Naive thymus-derived CD4-positive, alpha-beta T cell (primary cell): ENCODE measurements at regions of chr17 and their contacts with region 1.

Region 1: DNA sequence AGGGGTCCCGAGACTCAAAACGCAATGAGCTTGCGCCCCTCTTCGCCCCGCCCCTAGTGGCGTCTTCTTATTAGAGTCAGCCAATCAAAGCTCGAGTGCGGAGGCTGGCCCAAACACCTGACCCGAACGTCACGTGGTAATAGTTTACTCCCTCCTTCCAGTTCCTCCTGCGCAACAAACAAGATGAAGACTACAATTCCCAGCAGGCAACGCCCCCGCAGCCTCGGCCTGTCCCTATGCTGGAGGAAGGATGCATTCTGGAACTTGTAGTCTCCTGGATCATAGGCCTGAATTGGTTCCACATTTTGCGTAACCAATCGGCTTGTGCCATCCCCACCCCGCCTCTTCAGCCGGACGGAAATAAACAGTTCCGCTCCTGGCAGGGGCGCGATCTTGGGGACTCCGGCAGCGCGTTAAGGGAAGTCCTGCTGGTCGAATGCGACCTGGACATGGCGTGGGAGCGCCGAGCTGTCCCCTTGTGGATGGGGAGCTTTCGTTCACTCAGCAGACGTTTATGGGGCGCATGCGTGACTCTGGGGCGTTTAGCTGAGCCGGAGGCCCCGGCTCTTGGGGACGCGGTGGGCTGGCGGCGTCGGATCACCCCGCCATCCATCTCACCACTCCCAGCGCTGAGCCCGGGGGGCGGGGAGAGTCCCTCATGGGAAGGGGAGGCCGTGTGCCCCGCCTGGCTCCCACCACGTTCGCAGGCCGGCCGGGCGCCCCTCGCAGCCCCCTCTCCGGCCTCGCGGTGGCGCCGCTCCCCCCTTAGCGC is at the start of gene WBP2:
- DNase-seq: peak; percentile 82 to 100 (median 98)
- ATAC-seq: peak; percentile 94
- H3K4me3 ChIP-seq: peak within 1 kb of the TSS; percentile 93
- H3K4me3 Mint-ChIP-seq: peak within 1 kb of the TSS in 2 of 10 donors; percentile 89 to 92
- H3K27ac ChIP-seq: peak within 1 kb of the TSS; percentile 88
- H3K27ac Mint-ChIP-seq: peak within 1 kb of the TSS in 6 of 9 donors; percentile 84 to 95 (median 90)
- H3K4me1 ChIP-seq: peaks cover 19 to 25% of the 10 kb centered on the region in 2 donors
- H3K4me1 Mint-ChIP-seq: peaks cover 19 to 47% (median 39%) of the 10 kb centered on the region in 7 donors
- H3K27me3 ChIP-seq: no peaks in the 10 kb centered on the region
- H3K27me3 Mint-ChIP-seq: no peaks in the 10 kb centered on the region
- total RNA-seq, gene WBP2: 87.7 to 159 (median 112) TPM

Region 2: GRCh38 chr17:75289115-75289831 is 566.2 kb before region 1 on chr17 and contains the start of gene SLC25A19:
- CTCF ChIA-PET with region 1: no interaction called
- POLR2A ChIA-PET with region 1: no interaction called
- intact Hi-C with region 1: loop called in 1 of 2 experiments (anchors 1 kb)
- DNase-seq: peak; percentile 80 to 98 (median 95)
- ATAC-seq: peak; percentile 96
- H3K4me3 ChIP-seq: peak within 1 kb of the TSS; percentile 84
- H3K4me3 Mint-ChIP-seq: peak within 1 kb of the TSS; percentile 96 to 100 (median 100)
- H3K27ac ChIP-seq: peak within 1 kb of the TSS; percentile 90
- H3K27ac Mint-ChIP-seq: peak within 1 kb of the TSS; percentile 99 to 100 (median 100)
- H3K4me1 ChIP-seq: peaks cover 0 to 6% of the 10 kb centered on the region in 2 donors
- H3K4me1 Mint-ChIP-seq: peaks cover 6 to 28% (median 15%) of the 10 kb centered on the region in 7 donors
- H3K27me3 ChIP-seq: no peaks in the 10 kb centered on the region
- H3K27me3 Mint-ChIP-seq: peaks cover 0 to 2% (median 0%) of the 10 kb centered on the region in 5 donors
- total RNA-seq, gene SLC25A19: 15.6 to 42.5 (median 21.1) TPM

Region 3: GRCh38 chr17:75779231-75779986 is 76.1 kb before region 1 on chr17:
- CTCF ChIA-PET with region 1: interaction called, 6 read pairs
- POLR2A ChIA-PET with region 1: interaction called, 238 read pairs
- intact Hi-C with region 1: loop called (anchors 1 to 5 kb)
- DNase-seq: peak; percentile 84 to 99 (median 96)
- ATAC-seq: peak; percentile 79
- H3K4me3 ChIP-seq: peak overlapping the region; percentile 85
- H3K4me3 Mint-ChIP-seq: peak overlapping the region; percentile 83 to 100 (median 98)
- H3K27ac ChIP-seq: peak overlapping the region; percentile 98
- H3K27ac Mint-ChIP-seq: peak overlapping the region; percentile 89 to 100 (median 99)
- H3K4me1 ChIP-seq: peaks cover 31 to 35% of the 10 kb centered on the region in 2 donors
- H3K4me1 Mint-ChIP-seq: peaks cover 19 to 68% (median 56%) of the 10 kb centered on the region in 7 donors
- H3K27me3 ChIP-seq: no peaks in the 10 kb centered on the region
- H3K27me3 Mint-ChIP-seq: peaks cover 0 to 3% (median 0%) of the 10 kb centered on the region in 5 donors

Region 4: DNA sequence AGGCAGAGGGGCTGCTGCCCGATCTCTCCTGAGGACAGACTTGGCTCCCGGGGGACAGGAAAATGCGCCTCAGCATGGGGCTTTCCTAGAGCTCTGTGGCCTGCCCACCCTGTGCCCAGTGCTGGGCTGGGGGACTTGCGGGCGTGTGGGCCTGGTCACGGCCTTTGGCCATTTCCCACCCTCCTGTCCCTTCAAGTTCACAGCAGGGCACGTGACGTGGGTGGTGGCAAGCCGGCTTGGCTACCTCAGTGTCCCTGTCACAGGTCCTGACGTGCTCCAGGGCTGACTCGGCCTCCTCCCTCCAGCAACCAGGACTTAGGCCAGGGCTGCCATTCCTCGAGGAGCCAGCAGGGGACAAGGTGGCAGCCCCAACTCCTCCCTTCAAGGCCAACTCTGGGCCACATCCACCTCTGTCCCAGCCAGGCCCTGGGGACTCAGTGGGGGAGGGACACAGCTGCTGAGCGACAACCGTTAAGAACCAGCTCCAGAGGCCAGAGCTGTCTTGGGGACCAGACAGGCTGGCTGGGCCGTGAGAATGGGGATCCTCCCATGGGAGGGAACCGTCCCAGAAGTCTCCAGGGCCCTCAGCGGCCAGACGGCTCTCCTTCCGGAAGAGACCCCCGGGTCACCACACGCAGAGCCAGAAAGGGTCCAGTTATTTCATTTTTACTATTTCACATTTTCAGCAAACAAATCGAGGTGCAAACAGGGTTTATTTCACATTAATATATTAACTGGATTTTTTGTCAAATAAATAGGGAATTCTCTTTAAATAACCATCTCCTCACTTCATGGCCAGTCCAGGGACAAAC is 10.2 kb before region 1 on chr17:
- CTCF ChIA-PET with region 1: interaction called, 17 read pairs
- POLR2A ChIA-PET with region 1: interaction called, 109 read pairs
- intact Hi-C with region 1: loop called (anchors 1 to 2 kb)
- DNase-seq: peak in 7 of 9 donors; percentile 41 to 67 (median 46)
- ATAC-seq: peak; percentile 68
- H3K4me3 ChIP-seq: no peak overlapping the region
- H3K4me3 Mint-ChIP-seq: peak overlapping the region in 9 of 10 donors; percentile 34 to 93 (median 53)
- H3K27ac ChIP-seq: peak overlapping the region; percentile 97
- H3K27ac Mint-ChIP-seq: peak overlapping the region in 8 of 9 donors; percentile 28 to 98 (median 66)
- H3K4me1 ChIP-seq: peaks cover 21 to 30% of the 10 kb centered on the region in 2 donors
- H3K4me1 Mint-ChIP-seq: peaks cover 4 to 36% (median 19%) of the 10 kb centered on the region in 7 donors
- H3K27me3 ChIP-seq: no peaks in the 10 kb centered on the region
- H3K27me3 Mint-ChIP-seq: no peaks in the 10 kb centered on the region

Region 5: GRCh38 chr17:75896415-75897159 is 41.1 kb after region 1 on chr17 and contains the start of gene TRIM65:
- CTCF ChIA-PET with region 1: interaction called, 21 read pairs
- POLR2A ChIA-PET with region 1: interaction called, 67 read pairs
- intact Hi-C with region 1: loop called (anchors 1 kb)
- DNase-seq: peak; percentile 63 to 87 (median 71)
- ATAC-seq: peak; percentile 91
- H3K4me3 ChIP-seq: peak within 1 kb of the TSS; percentile 65
- H3K4me3 Mint-ChIP-seq: peak within 1 kb of the TSS; percentile 55 to 92 (median 84)
- H3K27ac ChIP-seq: peak within 1 kb of the TSS; percentile 75
- H3K27ac Mint-ChIP-seq: peak within 1 kb of the TSS; percentile 66 to 91 (median 85)
- H3K4me1 ChIP-seq: peaks cover 8 to 12% of the 10 kb centered on the region in 2 donors
- H3K4me1 Mint-ChIP-seq: peaks cover 22 to 32% (median 26%) of the 10 kb centered on the region in 7 donors
- H3K27me3 ChIP-seq: no peaks in the 10 kb centered on the region
- H3K27me3 Mint-ChIP-seq: no peaks in the 10 kb centered on the region
- total RNA-seq, gene TRIM65: 20.9 to 37.7 (median 29.6) TPM

Region 6: DNA sequence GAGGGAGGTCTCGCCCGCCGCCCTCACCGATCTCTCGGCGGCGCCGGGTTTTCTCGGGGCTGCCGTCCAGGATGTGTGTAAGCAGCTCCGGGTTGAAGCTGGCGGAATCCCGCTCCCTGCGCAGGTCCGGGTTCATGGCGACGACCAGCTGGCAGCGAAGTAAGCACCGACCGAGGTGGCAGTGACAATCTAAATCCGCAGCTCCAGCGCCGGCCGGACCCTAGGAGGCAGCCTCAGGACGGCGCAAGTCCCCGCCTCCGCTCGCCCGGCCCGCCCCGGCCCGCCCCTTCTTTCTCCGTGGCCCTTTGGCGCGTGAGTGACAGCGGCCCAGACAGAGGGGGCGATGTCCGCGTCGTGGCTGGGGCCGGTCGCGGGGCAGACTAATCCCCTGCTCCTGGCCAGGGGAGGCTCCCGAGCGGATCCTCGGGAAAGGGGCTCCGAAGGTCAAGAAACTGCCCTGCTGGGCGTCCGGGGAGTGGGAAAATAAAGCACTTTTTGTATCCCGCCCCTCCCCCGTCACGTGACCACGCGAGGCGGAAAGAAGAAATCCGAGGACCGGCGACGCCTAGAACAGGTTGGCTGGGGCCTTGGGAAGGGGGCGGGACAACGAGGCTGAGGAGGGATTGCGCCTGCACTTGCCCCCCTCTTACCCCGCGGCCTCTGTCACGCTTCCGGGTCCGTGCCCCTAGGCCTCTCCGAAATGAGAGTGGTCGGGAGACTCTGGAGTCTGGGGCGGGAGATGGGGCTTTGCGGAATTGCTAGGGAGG is 123.6 kb after region 1 on chr17 and contains the starts of genes ACOX1 and TEN1:
- CTCF ChIA-PET with region 1: no interaction called
- POLR2A ChIA-PET with region 1: interaction called, 5 read pairs
- intact Hi-C with region 1: loop called in 1 of 2 experiments (anchors 1 kb)
- DNase-seq: peak; percentile 84 to 96 (median 93)
- ATAC-seq: peak; percentile 95
- H3K4me3 ChIP-seq: peak within 1 kb of the TSS; percentile 89
- H3K4me3 Mint-ChIP-seq: peak within 1 kb of the TSS; percentile 91 to 99 (median 98)
- H3K27ac ChIP-seq: peak within 1 kb of the TSS; percentile 100
- H3K27ac Mint-ChIP-seq: peak within 1 kb of the TSS; percentile 98 to 100 (median 100)
- H3K4me1 ChIP-seq: peaks cover 5 to 6% of the 10 kb centered on the region in 2 donors
- H3K4me1 Mint-ChIP-seq: peaks cover 26 to 53% (median 47%) of the 10 kb centered on the region in 7 donors
- H3K27me3 ChIP-seq: no peaks in the 10 kb centered on the region
- H3K27me3 Mint-ChIP-seq: no peaks in the 10 kb centered on the region
- total RNA-seq, gene ACOX1: 22.8 to 35.0 (median 33.5) TPM
- total RNA-seq, gene TEN1: 13.1 to 20.1 (median 13.8) TPM

Region 7: GRCh38 chr17:76726231-76726775 is 870.8 kb after region 1 on chr17 and contains the start of gene JMJD6:
- CTCF ChIA-PET with region 1: no interaction called
- POLR2A ChIA-PET with region 1: no interaction called
- intact Hi-C with region 1: loop called in 1 of 2 experiments (anchors 2 kb)
- DNase-seq: peak in 5 of 9 donors; percentile 92 to 95 (median 93)
- ATAC-seq: peak; percentile 88
- H3K4me3 ChIP-seq: peak within 1 kb of the TSS; percentile 90
- H3K4me3 Mint-ChIP-seq: peak within 1 kb of the TSS; percentile 93 to 100 (median 98)
- H3K27ac ChIP-seq: peak within 1 kb of the TSS; percentile 97
- H3K27ac Mint-ChIP-seq: peak within 1 kb of the TSS; percentile 98 to 99 (median 99)
- H3K4me1 ChIP-seq: peaks cover 36 to 45% of the 10 kb centered on the region in 2 donors
- H3K4me1 Mint-ChIP-seq: peaks cover 19 to 76% (median 43%) of the 10 kb centered on the region in 7 donors
- H3K27me3 ChIP-seq: no peaks in the 10 kb centered on the region
- H3K27me3 Mint-ChIP-seq: no peaks in the 10 kb centered on the region
- total RNA-seq, gene JMJD6: 39.9 to 132 (median 58.3) TPM